CD4-positive, alpha-beta T cell (primary cell): ENCODE measurements at regions of chr4 and their contacts with region 1.

Region 1: DNA sequence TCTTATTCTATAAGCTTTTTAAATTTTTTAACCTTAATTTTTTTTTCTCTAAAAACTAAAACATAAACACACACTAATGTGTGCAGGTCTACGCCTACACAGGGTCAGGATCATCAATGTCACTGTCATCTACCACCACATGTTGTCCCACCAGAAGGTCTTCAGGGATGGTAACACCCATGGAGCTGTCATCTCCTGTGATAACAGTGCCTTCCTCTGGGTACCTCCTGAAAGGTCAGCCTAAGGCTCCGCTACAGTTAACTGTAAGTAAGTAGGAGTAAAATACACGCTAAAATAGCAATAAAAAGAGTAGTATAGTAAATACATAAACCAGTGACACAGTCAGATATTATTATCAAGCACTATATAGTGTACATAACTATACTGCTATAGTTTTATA is 45.9 kb upstream of the GPRIN3 start:
- DNase-seq: peak in 4 of 14 experiments; percentile 6 to 39 (median 20)
- ATAC-seq: no peak
- H3K4me3 ChIP-seq: no peak overlapping the region
- H3K4me3 Mint-ChIP-seq: no peak overlapping the region
- H3K27ac ChIP-seq: no peak overlapping the region
- H3K27ac Mint-ChIP-seq: no peak overlapping the region
- H3K4me1 ChIP-seq: no peaks in the 10 kb centered on the region
- H3K4me1 Mint-ChIP-seq: no peaks in the 10 kb centered on the region
- H3K27me3 ChIP-seq: no peaks in the 10 kb centered on the region
- H3K27me3 Mint-ChIP-seq: no peaks in the 10 kb centered on the region
- CTCF ChIP-seq: no peak

Region 2: GRCh38 chr4:89254847-89255246 is 98.7 kb before region 1 on chr4:
- CTCF ChIA-PET with region 1: interaction called, 6 read pairs
- POLR2A ChIA-PET with region 1: no interaction called
- intact Hi-C with region 1: loop called in 1 of 2 experiments (anchors 5 kb)
- DNase-seq: peak in 13 of 14 experiments; percentile 7 to 81 (median 33)
- ATAC-seq: peak; percentile 65
- H3K4me3 ChIP-seq: no peak overlapping the region
- H3K4me3 Mint-ChIP-seq: peak overlapping the region; percentile 1
- H3K27ac ChIP-seq: peak overlapping the region in 1 of 2 donors; percentile 38
- H3K27ac Mint-ChIP-seq: peak overlapping the region; percentile 47
- H3K4me1 ChIP-seq: peaks cover 38% of the 10 kb centered on the region
- H3K4me1 Mint-ChIP-seq: peaks cover 89% of the 10 kb centered on the region
- H3K27me3 ChIP-seq: no peaks in the 10 kb centered on the region
- H3K27me3 Mint-ChIP-seq: no peaks in the 10 kb centered on the region
- CTCF ChIP-seq: peak; percentile 88

Region 3: DNA sequence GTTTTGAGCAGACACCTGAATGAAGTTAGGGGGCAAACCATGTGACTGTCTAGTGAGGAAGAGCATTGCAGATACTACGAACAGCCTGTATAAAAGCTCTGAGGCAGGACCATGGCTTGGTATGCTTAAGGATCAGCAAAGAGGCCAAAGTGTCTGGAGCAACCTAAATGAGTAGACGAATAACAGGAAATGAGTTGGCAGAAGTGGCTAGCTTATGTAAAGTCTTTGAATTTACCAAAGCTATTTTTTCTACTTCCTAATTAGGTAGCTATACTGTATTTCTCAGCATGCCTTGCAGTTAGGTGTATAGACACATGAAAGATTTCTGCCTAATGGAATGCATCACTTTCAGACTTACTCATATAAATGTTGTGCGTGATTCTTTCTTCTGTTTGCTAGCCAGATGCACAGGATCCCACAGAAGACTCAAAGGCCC is 36.6 kb before region 1 on chr4:
- CTCF ChIA-PET with region 1: no interaction called
- POLR2A ChIA-PET with region 1: no interaction called
- intact Hi-C with region 1: loop called in 1 of 2 experiments (anchors 5 kb)
- DNase-seq: peak in 5 of 14 experiments; percentile 27 to 83 (median 69)
- ATAC-seq: peak; percentile 85
- H3K4me3 ChIP-seq: no peak overlapping the region
- H3K4me3 Mint-ChIP-seq: peak overlapping the region; percentile 13
- H3K27ac ChIP-seq: peak overlapping the region; percentile 38 to 68
- H3K27ac Mint-ChIP-seq: peak overlapping the region; percentile 81
- H3K4me1 ChIP-seq: peaks cover 26% of the 10 kb centered on the region
- H3K4me1 Mint-ChIP-seq: peaks cover 38% of the 10 kb centered on the region
- H3K27me3 ChIP-seq: no peaks in the 10 kb centered on the region
- H3K27me3 Mint-ChIP-seq: no peaks in the 10 kb centered on the region
- CTCF ChIP-seq: no peak